MCF 10A (cell line): ENCODE measurements at regions of chr7 and their contacts with region 1.

Region 1: DNA sequence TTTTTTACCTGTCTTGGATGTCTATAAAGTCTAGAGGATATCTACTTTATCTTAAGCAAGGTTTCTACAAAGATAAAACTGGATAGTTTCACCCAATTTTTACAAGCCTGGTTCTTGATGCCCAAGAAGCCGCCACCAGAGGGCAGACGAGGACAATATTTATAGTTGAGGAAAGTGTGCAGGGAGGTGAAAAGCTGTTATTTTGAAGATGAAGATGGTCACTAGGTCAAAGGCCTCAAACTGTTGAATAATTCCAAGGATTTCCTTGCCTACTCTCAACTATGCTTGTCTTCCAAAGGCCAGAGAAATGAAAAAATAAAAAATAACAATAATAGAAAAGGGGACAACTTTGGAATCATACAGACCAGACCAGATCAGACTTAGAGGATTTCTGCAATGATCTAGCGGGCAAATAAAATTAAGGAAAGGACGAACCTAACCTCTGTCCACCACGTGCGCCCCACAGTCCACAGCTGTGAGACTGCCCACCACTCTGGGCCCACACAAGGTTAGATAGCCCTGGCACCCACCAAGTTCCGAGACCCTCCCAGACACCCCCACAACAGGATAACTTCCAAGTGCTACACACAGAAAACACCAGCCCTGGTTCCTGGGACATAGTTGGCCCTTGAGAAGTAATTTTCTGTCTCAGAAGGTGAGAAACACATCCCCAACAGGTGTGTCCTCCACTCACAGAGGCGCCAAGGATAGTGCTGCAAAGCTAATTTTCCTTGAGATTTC is 2.8 kb downstream of the PKD1L1 start:
- DNase-seq: peak; percentile 77
- H3K4me3 Mint-ChIP-seq: no peak overlapping the region
- H3K27ac Mint-ChIP-seq: no peak overlapping the region
- H3K4me1 Mint-ChIP-seq: peaks cover 11% of the 10 kb centered on the region
- H3K27me3 Mint-ChIP-seq: no peaks in the 10 kb centered on the region
- CTCF ChIP-seq: peak; percentile 71

Region 2: GRCh38 chr7:47873762-47874161 is 71.7 kb before region 1 on chr7:
- CTCF ChIA-PET with region 1: no interaction called
- POLR2A ChIA-PET with region 1: no interaction called
- intact Hi-C with region 1: no loop called
- DNase-seq: peak; percentile 37
- H3K4me3 Mint-ChIP-seq: no peak overlapping the region
- H3K27ac Mint-ChIP-seq: no peak overlapping the region
- H3K4me1 Mint-ChIP-seq: no peaks in the 10 kb centered on the region
- H3K27me3 Mint-ChIP-seq: peaks cover 36% of the 10 kb centered on the region
- CTCF ChIP-seq: no peak

Region 3: DNA sequence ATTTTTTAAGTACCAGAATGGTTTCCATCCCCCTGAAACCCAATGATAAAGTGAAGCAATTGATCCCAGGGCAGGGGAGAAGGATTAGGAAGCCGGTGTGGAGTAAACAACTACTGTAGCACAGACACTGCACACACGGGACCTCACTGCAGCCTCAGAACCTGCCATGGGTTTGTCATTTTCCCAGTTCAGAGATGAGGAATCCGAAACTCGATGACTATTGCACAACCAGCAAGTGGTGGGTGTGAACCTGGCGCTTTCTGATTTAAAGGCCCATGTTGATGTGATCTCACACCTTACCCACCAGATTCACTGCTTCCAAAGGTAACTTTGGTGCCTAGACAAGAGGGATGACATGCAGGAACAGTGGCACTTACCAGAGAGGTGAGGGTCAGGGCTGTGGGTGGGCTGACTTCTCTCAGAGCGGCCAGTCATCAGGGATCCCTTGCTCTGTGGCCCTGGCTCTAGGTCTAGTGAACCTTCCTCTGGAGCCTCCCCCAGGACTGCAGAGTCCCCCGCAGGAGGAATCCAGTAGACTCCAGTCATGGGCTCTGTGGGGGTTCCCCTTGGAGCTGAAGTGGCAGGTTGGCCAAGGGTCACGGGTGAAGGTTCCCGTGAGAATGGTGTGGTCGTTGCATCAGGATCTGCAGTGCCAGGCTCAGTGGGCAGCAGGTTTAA is 60.0 kb before region 1 on chr7:
- CTCF ChIA-PET with region 1: no interaction called
- POLR2A ChIA-PET with region 1: no interaction called
- intact Hi-C with region 1: no loop called
- DNase-seq: peak; percentile 50
- H3K4me3 Mint-ChIP-seq: no peak overlapping the region
- H3K27ac Mint-ChIP-seq: no peak overlapping the region
- H3K4me1 Mint-ChIP-seq: no peaks in the 10 kb centered on the region
- H3K27me3 Mint-ChIP-seq: peaks cover 9% of the 10 kb centered on the region
- CTCF ChIP-seq: no peak

Region 4: GRCh38 chr7:47968847-47969774 is 23.7 kb after region 1 on chr7:
- CTCF ChIA-PET with region 1: interaction called, 15 read pairs
- POLR2A ChIA-PET with region 1: interaction called, 3 read pairs
- intact Hi-C with region 1: no loop called
- DNase-seq: peak; percentile 60
- H3K4me3 Mint-ChIP-seq: no peak overlapping the region
- H3K27ac Mint-ChIP-seq: no peak overlapping the region
- H3K4me1 Mint-ChIP-seq: peaks cover 2% of the 10 kb centered on the region
- H3K27me3 Mint-ChIP-seq: no peaks in the 10 kb centered on the region
- CTCF ChIP-seq: peak; percentile 80

Region 5: GRCh38 chr7:48132792-48133191 is 187.4 kb after region 1 on chr7:
- CTCF ChIA-PET with region 1: interaction called, 12 read pairs
- POLR2A ChIA-PET with region 1: no interaction called
- intact Hi-C with region 1: no loop called
- DNase-seq: no peak
- H3K4me3 Mint-ChIP-seq: no peak overlapping the region
- H3K27ac Mint-ChIP-seq: no peak overlapping the region
- H3K4me1 Mint-ChIP-seq: no peaks in the 10 kb centered on the region
- H3K27me3 Mint-ChIP-seq: peaks cover 17% of the 10 kb centered on the region
- CTCF ChIP-seq: no peak

Region 6: DNA sequence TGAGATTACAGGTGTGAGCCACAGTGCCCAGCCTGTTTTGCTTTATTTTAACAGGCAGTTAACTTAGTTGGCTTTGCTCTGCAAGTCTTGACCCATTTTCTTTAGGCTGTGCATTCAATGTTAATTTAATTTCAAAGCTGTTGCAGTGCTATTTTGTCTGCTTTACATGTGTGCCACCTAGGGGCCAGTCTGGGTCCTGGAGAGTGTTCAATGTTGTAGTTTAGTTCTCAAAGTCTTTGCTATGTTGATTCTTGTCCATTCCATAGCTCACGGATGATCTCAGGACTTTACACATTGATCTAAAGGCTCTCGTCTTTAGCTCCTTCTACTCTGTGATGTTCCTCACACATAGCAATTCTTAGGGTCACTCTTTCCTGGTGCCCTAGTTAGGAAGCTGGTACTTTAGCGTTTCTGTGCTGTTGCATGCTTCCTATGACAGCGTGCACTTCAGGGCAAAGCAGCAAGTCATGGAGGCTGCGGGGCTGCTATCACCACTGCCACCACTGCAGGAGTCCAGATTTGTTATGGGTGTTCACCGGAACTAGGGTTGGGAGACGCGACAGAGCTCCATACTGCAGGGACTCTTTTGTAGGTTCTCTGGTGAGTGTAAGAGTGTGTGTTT is 209.5 kb after region 1 on chr7:
- CTCF ChIA-PET with region 1: interaction called, 149 read pairs
- POLR2A ChIA-PET with region 1: interaction called, 3 read pairs
- intact Hi-C with region 1: loop called (anchors 1 kb)
- DNase-seq: peak; percentile 59
- H3K4me3 Mint-ChIP-seq: no peak overlapping the region
- H3K27ac Mint-ChIP-seq: no peak overlapping the region
- H3K4me1 Mint-ChIP-seq: no peaks in the 10 kb centered on the region
- H3K27me3 Mint-ChIP-seq: peaks cover 47% of the 10 kb centered on the region
- CTCF ChIP-seq: peak; percentile 79

Region 7: DNA sequence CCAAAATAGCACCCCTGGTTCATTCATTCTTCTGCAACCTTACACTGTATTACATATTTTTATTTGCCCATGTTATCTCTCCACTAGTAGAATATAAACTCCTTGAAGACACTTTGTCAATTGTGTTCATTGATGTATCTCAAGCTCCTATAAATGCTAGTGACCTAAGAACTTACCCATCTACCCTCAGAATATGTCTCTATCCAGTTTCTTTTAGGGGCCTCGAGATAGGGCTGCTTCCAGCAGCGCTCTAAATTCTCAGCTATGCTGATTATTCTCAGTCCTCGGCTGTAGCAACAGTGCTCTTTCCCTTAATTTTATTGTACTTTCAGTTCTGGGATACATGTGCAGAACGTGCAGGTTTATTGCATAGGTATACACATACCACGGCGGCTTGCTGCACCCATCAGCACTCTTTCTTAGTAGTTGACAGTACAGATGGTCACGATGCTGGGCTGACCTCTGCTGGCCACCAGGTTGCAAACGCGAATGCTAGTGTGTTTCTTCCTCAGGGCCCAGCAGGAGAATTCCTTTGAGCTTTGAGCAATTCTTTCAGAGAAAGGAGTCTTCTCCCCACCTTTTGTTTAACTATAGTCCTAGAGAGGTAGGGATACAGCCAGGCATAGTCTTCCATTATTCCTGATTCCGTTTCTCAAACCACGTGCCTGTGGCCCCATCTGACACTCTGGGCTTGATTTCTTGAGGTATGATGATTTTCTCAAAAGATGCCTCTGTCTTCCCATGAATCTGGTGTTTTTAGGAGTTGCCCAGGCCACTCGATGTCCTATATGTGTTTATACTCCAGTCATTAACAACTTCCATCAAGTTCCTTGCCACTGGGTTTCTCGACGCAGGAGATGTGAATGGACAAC is 929.9 kb after region 1 on chr7:
- CTCF ChIA-PET with region 1: no interaction called
- POLR2A ChIA-PET with region 1: no interaction called
- intact Hi-C with region 1: loop called (anchors 10 kb)
- DNase-seq: peak; percentile 43
- H3K4me3 Mint-ChIP-seq: no peak overlapping the region
- H3K27ac Mint-ChIP-seq: no peak overlapping the region
- H3K4me1 Mint-ChIP-seq: no peaks in the 10 kb centered on the region
- H3K27me3 Mint-ChIP-seq: peaks cover 49% of the 10 kb centered on the region
- CTCF ChIP-seq: peak; percentile 79